Posterior cingulate gyrus (tissue), 11 donors: ENCODE measurements at regions of chr18 and their contacts with region 1.

Region 1: DNA sequence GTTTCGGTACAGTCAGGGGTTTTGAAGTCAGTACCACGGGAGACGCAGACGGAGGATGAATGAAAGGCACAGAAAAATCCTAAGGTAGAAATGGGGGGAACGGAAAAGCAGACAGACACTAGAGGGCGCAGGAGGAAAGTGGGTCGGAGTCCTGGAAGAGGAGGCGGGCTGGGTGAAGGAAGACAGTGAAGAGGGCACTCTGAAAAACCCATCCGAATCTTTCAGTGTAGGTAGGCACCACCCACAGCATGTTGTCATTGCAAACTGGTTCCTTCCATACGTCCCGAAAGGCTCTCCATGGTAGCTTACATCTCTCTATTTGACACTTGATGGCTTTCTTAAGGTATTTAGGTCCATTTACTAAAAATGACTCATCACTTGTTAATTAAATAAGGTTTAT is 18.5 kb upstream of the ZNF236 start:
- DNase-seq: peak in 6 of 10 donors; percentile 39 to 88 (median 67)

Region 2: DNA sequence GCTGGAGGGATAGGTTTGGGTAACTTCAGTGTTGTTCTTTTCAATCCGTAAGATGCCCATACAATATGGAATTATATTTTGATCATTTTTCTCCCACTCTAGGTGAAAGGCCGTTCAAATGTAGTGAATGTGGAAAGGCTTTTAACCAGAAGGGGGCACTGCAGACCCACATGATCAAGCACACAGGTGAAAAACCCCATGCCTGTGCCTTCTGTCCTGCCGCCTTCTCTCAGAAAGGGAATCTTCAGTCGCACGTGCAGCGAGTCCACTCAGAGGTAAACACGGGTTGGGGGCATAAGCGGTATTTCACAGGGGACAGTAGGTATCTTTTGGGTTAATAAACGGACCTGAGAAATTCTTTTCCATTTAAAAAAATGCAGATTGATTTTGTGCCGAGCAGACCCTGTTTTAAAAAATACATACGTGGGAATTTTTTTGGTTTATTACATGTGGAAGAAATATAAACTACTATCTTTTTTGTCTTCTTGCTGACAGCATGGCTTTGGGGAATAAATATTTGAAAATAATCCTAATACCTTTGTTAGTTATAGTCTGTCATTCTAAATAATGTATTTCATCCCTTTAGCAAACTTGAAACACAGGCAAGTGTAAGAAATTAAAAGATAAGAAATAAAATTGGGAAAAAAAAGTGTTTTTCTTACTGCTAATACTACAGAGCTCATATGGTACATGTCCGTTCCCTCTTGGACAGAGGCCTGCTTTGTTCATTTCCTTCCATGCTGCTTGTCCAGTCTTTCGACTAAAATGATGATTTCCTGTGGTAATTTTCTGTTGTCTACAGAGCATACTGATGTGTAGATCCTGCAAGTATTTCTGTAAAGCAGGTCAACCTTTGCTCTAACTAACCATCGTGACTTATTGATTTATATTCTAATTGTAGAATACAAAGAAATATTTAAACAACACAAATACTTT is 71.8 kb after region 1 on chr18:
- intact Hi-C with region 1: loop called (anchors 5 kb)
- DNase-seq: peak in 5 of 10 donors; percentile 49 to 85 (median 52)

Region 3: DNA sequence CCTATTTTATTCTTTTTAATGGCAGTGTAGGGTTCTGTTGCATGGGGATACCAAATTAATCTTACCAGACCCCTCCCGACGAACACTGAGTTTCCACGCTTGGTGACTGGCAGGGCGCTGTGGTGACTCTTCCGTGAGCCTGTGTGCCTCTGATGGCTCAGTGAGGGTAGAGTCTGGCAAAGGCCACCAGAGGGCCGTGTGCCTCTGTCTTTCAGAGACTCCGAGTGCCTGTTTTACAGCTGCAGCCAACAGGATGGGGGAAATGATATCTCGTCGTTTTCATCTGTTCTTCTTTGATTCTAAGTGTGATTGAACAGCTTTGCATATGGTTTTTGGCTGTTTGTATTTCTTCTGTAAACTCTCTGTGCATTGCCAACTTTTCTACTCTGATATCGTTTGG is 118.3 kb after region 1 on chr18:
- intact Hi-C with region 1: loop called (anchors 2 kb)
- DNase-seq: peak in 9 of 10 donors; percentile 39 to 96 (median 71)

Region 4: DNA sequence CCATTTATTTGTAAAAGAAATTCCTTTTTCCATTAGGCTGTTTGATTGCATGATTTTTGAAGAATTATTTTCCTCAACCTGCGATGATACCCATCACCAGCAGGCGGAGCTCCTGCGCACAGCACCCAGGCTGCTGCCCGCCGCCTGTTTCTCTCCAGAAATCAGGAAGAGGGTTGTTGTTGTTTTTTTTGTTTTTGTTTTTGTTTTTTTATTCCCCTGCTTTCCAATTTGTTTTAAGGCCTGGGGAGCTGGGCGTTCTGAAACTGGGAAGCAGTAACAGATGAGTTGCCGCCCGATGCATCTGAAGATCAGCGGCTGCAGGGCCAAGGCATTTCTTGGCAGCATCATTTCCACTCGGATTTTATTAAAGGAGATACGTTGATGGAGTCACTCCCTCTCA is 196.7 kb after region 1 on chr18:
- intact Hi-C with region 1: no loop called
- DNase-seq: peak in 6 of 10 donors; percentile 61 to 95 (median 76)

Region 5: GRCh38 chr18:77067291-77068061 is 263.7 kb after region 1 on chr18:
- intact Hi-C with region 1: loop called (anchors 10 kb)
- DNase-seq: peak in 4 of 10 donors; percentile 62 to 94 (median 82)